MCF 10A (cell line): ENCODE measurements at regions of chr22 and their contacts with region 1.

Region 1: GRCh38 chr22:31248138-31248745 is 36.1 kb downstream of the LIMK2 start:
- DNase-seq: peak; percentile 95
- H3K4me3 Mint-ChIP-seq: peak overlapping the region; percentile 85
- H3K27ac Mint-ChIP-seq: peak overlapping the region; percentile 97
- H3K4me1 Mint-ChIP-seq: peaks cover 19% of the 10 kb centered on the region
- H3K27me3 Mint-ChIP-seq: no peaks in the 10 kb centered on the region
- CTCF ChIP-seq: no peak

Region 2: GRCh38 chr22:31094021-31094551 is 154.2 kb before region 1 on chr22:
- CTCF ChIA-PET with region 1: no interaction called
- POLR2A ChIA-PET with region 1: no interaction called
- intact Hi-C with region 1: no loop called
- DNase-seq: no peak
- H3K4me3 Mint-ChIP-seq: no peak overlapping the region
- H3K27ac Mint-ChIP-seq: no peak overlapping the region
- H3K4me1 Mint-ChIP-seq: no peaks in the 10 kb centered on the region
- H3K27me3 Mint-ChIP-seq: no peaks in the 10 kb centered on the region
- CTCF ChIP-seq: no peak

Region 3: DNA sequence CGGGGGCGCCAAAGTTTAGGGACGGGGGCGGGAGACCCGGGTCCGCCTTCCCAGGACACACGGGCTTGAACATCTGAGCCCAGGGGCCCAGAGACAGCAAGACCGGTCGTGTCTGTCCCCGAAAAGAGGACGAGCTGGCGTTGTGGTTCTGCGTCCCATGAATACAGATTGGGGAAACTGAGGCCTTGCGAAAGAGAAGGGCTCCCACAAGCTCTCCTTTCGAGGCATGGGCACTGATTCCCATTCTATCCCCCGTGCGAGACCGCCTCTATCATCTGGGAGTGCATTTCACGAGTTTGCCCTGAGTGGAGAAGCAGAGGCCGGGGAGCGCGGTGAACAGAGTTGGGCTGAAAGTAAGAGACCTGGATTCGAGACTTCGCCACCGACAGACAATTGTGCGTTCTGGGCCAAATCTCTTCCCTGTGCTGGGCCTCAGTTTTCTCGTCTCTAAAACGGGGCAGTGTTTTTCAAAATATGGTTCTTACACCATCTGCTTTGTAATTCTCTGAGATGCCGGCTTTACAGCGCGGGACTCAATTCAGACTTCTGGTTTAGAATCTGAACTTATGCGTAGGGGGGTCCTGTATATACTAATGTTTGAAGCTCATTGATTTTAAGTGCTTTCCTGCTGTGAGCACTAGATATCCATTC is 87.8 kb before region 1 on chr22:
- CTCF ChIA-PET with region 1: interaction called, 6 read pairs
- POLR2A ChIA-PET with region 1: interaction called, 74 read pairs
- intact Hi-C with region 1: no loop called
- DNase-seq: no peak
- H3K4me3 Mint-ChIP-seq: peak overlapping the region; percentile 89
- H3K27ac Mint-ChIP-seq: peak overlapping the region; percentile 97
- H3K4me1 Mint-ChIP-seq: peaks cover 14% of the 10 kb centered on the region
- H3K27me3 Mint-ChIP-seq: no peaks in the 10 kb centered on the region
- CTCF ChIP-seq: no peak

Region 4: GRCh38 chr22:31192513-31192912 is 55.7 kb before region 1 on chr22:
- CTCF ChIA-PET with region 1: interaction called, 3 read pairs
- POLR2A ChIA-PET with region 1: interaction called, 26 read pairs
- intact Hi-C with region 1: no loop called
- DNase-seq: peak; percentile 69
- H3K4me3 Mint-ChIP-seq: no peak overlapping the region
- H3K27ac Mint-ChIP-seq: peak overlapping the region; percentile 88
- H3K4me1 Mint-ChIP-seq: peaks cover 17% of the 10 kb centered on the region
- H3K27me3 Mint-ChIP-seq: no peaks in the 10 kb centered on the region
- CTCF ChIP-seq: no peak

Region 5: GRCh38 chr22:31218565-31219262 is 29.5 kb before region 1 on chr22:
- CTCF ChIA-PET with region 1: interaction called, 18 read pairs
- POLR2A ChIA-PET with region 1: interaction called, 30 read pairs
- intact Hi-C with region 1: no loop called
- DNase-seq: peak; percentile 39
- H3K4me3 Mint-ChIP-seq: no peak overlapping the region
- H3K27ac Mint-ChIP-seq: peak overlapping the region; percentile 94
- H3K4me1 Mint-ChIP-seq: peaks cover 16% of the 10 kb centered on the region
- H3K27me3 Mint-ChIP-seq: no peaks in the 10 kb centered on the region
- CTCF ChIP-seq: no peak

Region 6: DNA sequence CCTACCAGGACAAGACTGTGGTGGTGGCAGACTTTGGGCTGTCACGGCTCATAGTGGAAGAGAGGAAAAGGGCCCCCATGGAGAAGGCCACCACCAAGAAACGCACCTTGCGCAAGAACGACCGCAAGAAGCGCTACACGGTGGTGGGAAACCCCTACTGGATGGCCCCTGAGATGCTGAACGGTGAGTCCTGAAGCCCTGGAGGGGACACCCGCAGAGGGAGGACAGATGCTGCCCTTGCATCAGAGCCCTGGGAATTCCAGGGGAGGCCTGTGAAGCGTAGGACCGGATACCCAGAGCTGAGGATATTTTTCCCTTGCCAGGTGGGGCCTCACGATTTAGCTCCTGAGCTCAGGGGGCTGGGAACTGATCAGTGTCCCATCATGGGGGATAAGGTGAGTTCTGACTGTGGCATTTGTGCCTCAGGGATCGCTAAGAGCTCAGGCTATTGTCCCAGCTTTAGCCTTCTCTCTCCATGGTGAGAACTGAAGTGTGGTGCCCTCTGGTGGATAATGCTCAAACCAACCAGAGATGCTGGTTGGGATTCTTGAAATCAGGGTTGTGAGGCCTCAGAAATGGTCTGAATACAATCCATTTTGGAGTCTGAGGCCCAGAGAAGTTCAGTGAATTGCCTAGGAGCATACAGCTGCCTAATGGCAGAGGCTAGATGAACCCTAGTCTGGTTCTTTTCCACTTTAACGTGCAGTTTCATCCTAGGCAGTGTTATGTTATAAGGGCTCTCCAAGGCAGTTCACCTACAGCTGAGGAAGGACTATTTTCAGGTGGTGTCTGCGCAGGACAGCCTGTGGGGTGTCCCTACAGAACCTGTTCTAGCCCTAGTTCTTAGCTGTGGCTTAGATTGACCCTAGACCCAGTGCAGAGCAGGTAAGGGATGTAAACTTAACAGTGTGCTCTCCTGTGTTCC is 24.5 kb after region 1 on chr22:
- CTCF ChIA-PET with region 1: interaction called, 55 read pairs
- POLR2A ChIA-PET with region 1: interaction called, 188 read pairs
- intact Hi-C with region 1: no loop called
- DNase-seq: peak; percentile 76
- H3K4me3 Mint-ChIP-seq: no peak overlapping the region
- H3K27ac Mint-ChIP-seq: no peak overlapping the region
- H3K4me1 Mint-ChIP-seq: peaks cover 8% of the 10 kb centered on the region
- H3K27me3 Mint-ChIP-seq: no peaks in the 10 kb centered on the region
- CTCF ChIP-seq: peak; percentile 66

Region 7: GRCh38 chr22:31295831-31296657 is 47.8 kb after region 1 on chr22:
- CTCF ChIA-PET with region 1: interaction called, 4 read pairs
- POLR2A ChIA-PET with region 1: interaction called, 62 read pairs
- intact Hi-C with region 1: no loop called
- DNase-seq: peak; percentile 56
- H3K4me3 Mint-ChIP-seq: no peak overlapping the region
- H3K27ac Mint-ChIP-seq: peak overlapping the region; percentile 80
- H3K4me1 Mint-ChIP-seq: peaks cover 24% of the 10 kb centered on the region
- H3K27me3 Mint-ChIP-seq: no peaks in the 10 kb centered on the region
- CTCF ChIP-seq: no peak

Region 8: GRCh38 chr22:31345331-31346254 is 97.4 kb after region 1 on chr22:
- CTCF ChIA-PET with region 1: interaction called, 3 read pairs
- POLR2A ChIA-PET with region 1: interaction called, 38 read pairs
- intact Hi-C with region 1: no loop called
- DNase-seq: peak; percentile 83
- H3K4me3 Mint-ChIP-seq: peak overlapping the region; percentile 76
- H3K27ac Mint-ChIP-seq: no peak overlapping the region
- H3K4me1 Mint-ChIP-seq: peaks cover 18% of the 10 kb centered on the region
- H3K27me3 Mint-ChIP-seq: no peaks in the 10 kb centered on the region
- CTCF ChIP-seq: peak; percentile 78